Breast epithelium (tissue), 4 donors: ENCODE measurements at regions of chr7 and their contacts with region 1.

Region 1: DNA sequence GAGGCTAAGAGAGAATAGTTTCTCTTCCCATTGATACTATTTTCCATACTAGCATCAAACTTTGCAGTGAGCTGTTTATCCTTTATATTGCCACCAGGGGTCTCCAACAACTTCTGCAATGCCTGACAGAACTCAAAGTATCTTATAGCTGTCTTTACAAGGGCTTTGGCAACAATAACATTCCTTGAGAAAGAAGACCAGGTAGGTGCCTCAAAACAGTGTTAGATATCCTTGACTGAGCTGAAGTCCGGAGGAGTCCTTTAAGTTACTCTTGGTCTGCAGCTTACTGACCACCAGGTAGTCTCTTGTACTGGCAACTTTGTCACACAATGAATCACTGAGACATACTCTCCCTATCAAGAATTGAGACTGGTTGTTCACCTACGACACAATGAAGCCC is 30.0 kb upstream of the TES start:
- DNase-seq: no peak
- H3K4me3 ChIP-seq: no peak overlapping the region
- H3K27ac ChIP-seq: no peak overlapping the region
- H3K4me1 ChIP-seq: no peaks in the 10 kb centered on the region
- H3K27me3 ChIP-seq: no peaks in the 10 kb centered on the region
- CTCF ChIP-seq: peak; percentile 47 to 76 (median 73)
- POLR2A ChIP-seq: no peak

Region 2: DNA sequence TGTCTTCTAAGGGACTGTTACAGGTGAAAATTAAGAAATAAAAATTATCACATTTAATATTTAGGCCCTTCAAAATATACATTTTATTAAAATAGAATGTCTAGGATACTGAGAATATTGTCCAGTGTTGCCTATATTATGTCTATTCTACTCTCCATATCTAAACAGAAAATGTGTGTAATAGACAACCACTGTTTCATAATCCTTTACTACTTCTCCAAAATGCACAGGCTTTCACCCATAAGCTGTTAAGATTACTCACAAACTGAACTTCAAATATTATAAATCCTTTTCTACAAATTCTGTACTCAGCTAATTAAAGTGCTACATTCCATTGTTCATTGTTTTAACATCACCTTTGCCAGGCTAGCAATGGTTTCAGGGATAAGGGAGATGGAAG is 93.0 kb before region 1 on chr7:
- intact Hi-C with region 1: no loop called
- DNase-seq: no peak
- H3K4me3 ChIP-seq: no peak overlapping the region
- H3K27ac ChIP-seq: no peak overlapping the region
- H3K4me1 ChIP-seq: no peaks in the 10 kb centered on the region
- H3K27me3 ChIP-seq: no peaks in the 10 kb centered on the region
- CTCF ChIP-seq: no peak
- POLR2A ChIP-seq: no peak

Region 3: GRCh38 chr7:116122972-116123595 is 57.2 kb before region 1 on chr7:
- intact Hi-C with region 1: no loop called
- DNase-seq: no peak
- H3K4me3 ChIP-seq: no peak overlapping the region
- H3K27ac ChIP-seq: no peak overlapping the region
- H3K4me1 ChIP-seq: no peaks in the 10 kb centered on the region
- H3K27me3 ChIP-seq: no peaks in the 10 kb centered on the region
- CTCF ChIP-seq: peak in 2 of 3 donors; percentile 13 to 38
- POLR2A ChIP-seq: no peak

Region 4: GRCh38 chr7:116236020-116236630 is 55.8 kb after region 1 on chr7:
- intact Hi-C with region 1: loop called (anchors 10 kb)
- DNase-seq: no peak
- H3K4me3 ChIP-seq: no peak overlapping the region
- H3K27ac ChIP-seq: no peak overlapping the region
- H3K4me1 ChIP-seq: no peaks in the 10 kb centered on the region
- H3K27me3 ChIP-seq: no peaks in the 10 kb centered on the region
- CTCF ChIP-seq: peak in 2 of 3 donors; percentile 54 to 64
- POLR2A ChIP-seq: no peak

Region 5: DNA sequence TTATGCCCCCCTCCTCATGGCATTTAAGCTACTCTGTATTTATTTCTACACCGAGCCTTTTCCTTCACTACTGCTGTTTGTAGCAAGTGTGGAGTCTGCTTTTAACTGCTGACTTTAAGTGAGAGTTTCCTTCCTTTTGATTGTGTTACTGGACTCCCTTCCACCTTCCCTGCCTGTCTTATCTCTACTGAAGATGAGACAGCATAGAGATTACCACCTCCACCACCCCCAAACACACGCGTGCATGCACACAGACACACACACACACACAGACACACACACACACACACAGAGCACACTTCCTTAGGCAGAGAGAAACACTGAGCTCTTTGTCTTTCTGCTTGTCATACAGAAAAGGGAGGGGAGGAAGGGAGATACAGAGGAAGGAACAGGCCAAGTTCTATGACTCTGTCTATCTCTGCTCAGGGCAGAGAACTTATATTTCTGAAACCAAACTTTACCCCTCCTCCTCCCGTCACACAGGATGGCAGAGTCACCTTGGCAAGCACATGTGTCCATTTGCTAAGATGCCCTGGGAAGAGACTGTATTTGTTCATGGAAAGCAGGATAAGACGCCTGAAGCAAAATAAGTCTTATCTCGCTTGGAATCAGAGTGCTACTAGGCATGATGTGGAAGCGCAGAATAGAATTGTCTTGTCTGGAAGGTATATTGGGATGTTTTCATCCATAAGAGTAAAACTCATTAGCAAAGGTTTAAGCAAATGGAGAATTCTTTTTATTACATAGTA is 237.5 kb after region 1 on chr7:
- intact Hi-C with region 1: no loop called
- DNase-seq: no peak
- H3K4me3 ChIP-seq: no peak overlapping the region
- H3K27ac ChIP-seq: no peak overlapping the region
- H3K4me1 ChIP-seq: no peaks in the 10 kb centered on the region
- H3K27me3 ChIP-seq: no peaks in the 10 kb centered on the region
- CTCF ChIP-seq: no peak
- POLR2A ChIP-seq: no peak

Region 6: GRCh38 chr7:117931314-117931713 is 1751.0 kb after region 1 on chr7:
- intact Hi-C with region 1: no loop called
- DNase-seq: no peak
- H3K4me3 ChIP-seq: no peak overlapping the region
- H3K27ac ChIP-seq: no peak overlapping the region
- H3K4me1 ChIP-seq: no peaks in the 10 kb centered on the region
- H3K27me3 ChIP-seq: no peaks in the 10 kb centered on the region
- CTCF ChIP-seq: no peak
- POLR2A ChIP-seq: no peak